PC-9 (cell line): ENCODE measurements at regions of chr15 and their contacts with region 1.

Region 1: DNA sequence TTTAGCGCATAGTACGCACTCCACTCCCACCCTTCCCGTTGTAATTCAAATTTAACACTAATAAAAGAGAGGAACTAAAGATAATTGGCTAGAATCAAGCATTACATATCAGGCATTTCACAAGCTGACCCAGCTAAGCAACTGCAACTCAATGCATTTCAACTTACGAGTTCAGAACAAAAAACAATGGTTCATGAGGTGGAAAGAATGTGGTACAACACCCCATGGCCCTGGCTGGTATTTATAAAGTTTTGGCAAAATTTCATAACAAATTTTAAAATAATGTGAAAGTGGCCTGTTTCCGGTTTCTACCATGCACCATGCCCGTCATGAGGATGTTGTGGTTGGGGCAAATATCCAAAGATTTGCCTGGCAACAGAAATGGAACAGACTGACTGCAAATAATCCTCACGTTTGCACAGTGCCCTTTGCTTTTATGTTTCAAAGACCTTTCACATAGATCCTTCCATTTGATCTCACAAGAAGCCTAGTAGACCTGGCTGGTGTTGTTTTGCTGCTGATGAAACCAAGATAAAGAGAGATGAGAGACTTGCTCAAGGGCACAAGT is 455.3 kb upstream of the NR2F2 start:
- DNase-seq: peak; percentile 63 to 79
- H3K4me3 ChIP-seq: no peak overlapping the region
- H3K27ac ChIP-seq: peak overlapping the region; percentile 25
- H3K4me1 ChIP-seq: peaks cover 37% of the 10 kb centered on the region
- H3K27me3 ChIP-seq: no peaks in the 10 kb centered on the region
- CTCF ChIP-seq: no peak

Region 2: GRCh38 chr15:95684693-95685115 is 190.5 kb before region 1 on chr15:
- CTCF ChIA-PET with region 1: no interaction called
- POLR2A ChIA-PET with region 1: no interaction called
- intact Hi-C with region 1: loop called (anchors 10 kb)
- DNase-seq: peak; percentile 32 to 67
- H3K4me3 ChIP-seq: no peak overlapping the region
- H3K27ac ChIP-seq: peak overlapping the region; percentile 76
- H3K4me1 ChIP-seq: peaks cover 18% of the 10 kb centered on the region
- H3K27me3 ChIP-seq: no peaks in the 10 kb centered on the region
- CTCF ChIP-seq: no peak

Region 3: GRCh38 chr15:95912066-95912625 is 36.9 kb after region 1 on chr15:
- CTCF ChIA-PET with region 1: no interaction called
- POLR2A ChIA-PET with region 1: no interaction called
- intact Hi-C with region 1: loop called (anchors 2 kb)
- DNase-seq: peak; percentile 38 to 47
- H3K4me3 ChIP-seq: no peak overlapping the region
- H3K27ac ChIP-seq: no peak overlapping the region
- H3K4me1 ChIP-seq: no peaks in the 10 kb centered on the region
- H3K27me3 ChIP-seq: no peaks in the 10 kb centered on the region
- CTCF ChIP-seq: no peak

Region 4: GRCh38 chr15:96093063-96093462 is 217.9 kb after region 1 on chr15:
- CTCF ChIA-PET with region 1: no interaction called
- POLR2A ChIA-PET with region 1: no interaction called
- intact Hi-C with region 1: no loop called
- DNase-seq: no peak
- H3K4me3 ChIP-seq: no peak overlapping the region
- H3K27ac ChIP-seq: no peak overlapping the region
- H3K4me1 ChIP-seq: no peaks in the 10 kb centered on the region
- H3K27me3 ChIP-seq: no peaks in the 10 kb centered on the region
- CTCF ChIP-seq: no peak

Region 5: GRCh38 chr15:96261575-96262034 is 386.4 kb after region 1 on chr15:
- CTCF ChIA-PET with region 1: no interaction called
- POLR2A ChIA-PET with region 1: no interaction called
- intact Hi-C with region 1: loop called (anchors 1 kb)
- DNase-seq: no peak
- H3K4me3 ChIP-seq: no peak overlapping the region
- H3K27ac ChIP-seq: no peak overlapping the region
- H3K4me1 ChIP-seq: peaks cover 33% of the 10 kb centered on the region
- H3K27me3 ChIP-seq: no peaks in the 10 kb centered on the region
- CTCF ChIP-seq: no peak

Region 6: DNA sequence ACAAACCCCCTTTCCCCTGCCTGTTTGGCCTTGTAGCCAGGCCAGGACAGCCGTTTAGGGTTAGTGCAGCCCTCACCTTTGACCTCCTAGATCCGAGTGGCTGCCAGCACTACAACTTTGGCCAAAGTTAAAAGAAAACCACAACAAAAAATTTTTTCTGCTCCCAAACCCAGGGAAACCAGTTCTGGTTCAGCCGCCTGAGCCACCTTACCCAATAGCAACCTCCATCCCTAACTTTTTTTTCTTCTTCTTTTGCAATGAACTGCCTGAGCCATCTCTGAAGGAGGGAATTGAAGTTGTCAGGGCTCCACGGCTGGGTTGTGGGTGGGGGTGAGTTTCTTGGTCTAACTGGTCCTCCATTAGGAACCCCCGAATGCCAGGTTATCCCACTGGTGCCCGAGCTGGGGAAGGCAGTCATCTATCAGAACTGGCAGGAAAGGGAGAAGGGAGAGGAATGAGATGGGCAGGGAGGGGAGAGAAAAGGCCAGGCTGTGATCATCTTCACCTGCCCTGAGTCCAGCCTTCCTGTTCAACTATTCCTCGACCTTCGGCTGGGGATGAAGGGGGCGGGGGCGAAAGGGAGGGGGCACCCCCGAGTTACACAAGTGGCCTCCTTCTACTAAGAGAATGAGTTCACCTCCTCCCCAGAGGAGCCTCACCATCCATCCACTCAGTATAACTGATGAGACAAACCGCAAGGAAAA is 449.1 kb after region 1 on chr15:
- CTCF ChIA-PET with region 1: interaction called, 6 read pairs
- POLR2A ChIA-PET with region 1: interaction called, 7 read pairs
- intact Hi-C with region 1: loop called (anchors 1 kb)
- DNase-seq: peak; percentile 26 to 76
- H3K4me3 ChIP-seq: peak overlapping the region; percentile 73
- H3K27ac ChIP-seq: peak overlapping the region; percentile 91
- H3K4me1 ChIP-seq: peaks cover 37% of the 10 kb centered on the region
- H3K27me3 ChIP-seq: no peaks in the 10 kb centered on the region
- CTCF ChIP-seq: no peak